Activated T-helper 1 cell treated with anti-CD3 and anti-CD28 coated beads, Interleukin-12 subunit alpha, Interleukin-12 subunit beta, Interleukin-2, Interleukin-4 antibody, amounts not matched to agents 30 ng/mL and 10 ng/mL and 1 ng/mL, durations not matched to agents 14 hours and 24 hours and 36 hours (primary cell): ENCODE measurements at regions of chr2 and their contacts with region 1.

Region 1: GRCh38 chr2:162153608-162154224 is 1.7 kb upstream of the GCG start:
- DNase-seq: peak; percentile 36
- H3K4me3 Mint-ChIP-seq: peak overlapping the region; percentile 28
- H3K27ac Mint-ChIP-seq: no peak overlapping the region
- H3K4me1 Mint-ChIP-seq: peaks cover 7% of the 10 kb centered on the region
- H3K27me3 Mint-ChIP-seq: peaks cover 37% of the 10 kb centered on the region

Region 2: GRCh38 chr2:161586517-161587167 is 567.1 kb before region 1 on chr2:
- intact Hi-C with region 1: loop called (anchors 1 kb)
- DNase-seq: no peak
- H3K4me3 Mint-ChIP-seq: no peak overlapping the region
- H3K27ac Mint-ChIP-seq: no peak overlapping the region
- H3K4me1 Mint-ChIP-seq: peaks cover 4% of the 10 kb centered on the region
- H3K27me3 Mint-ChIP-seq: peaks cover 26% of the 10 kb centered on the region

Region 3: DNA sequence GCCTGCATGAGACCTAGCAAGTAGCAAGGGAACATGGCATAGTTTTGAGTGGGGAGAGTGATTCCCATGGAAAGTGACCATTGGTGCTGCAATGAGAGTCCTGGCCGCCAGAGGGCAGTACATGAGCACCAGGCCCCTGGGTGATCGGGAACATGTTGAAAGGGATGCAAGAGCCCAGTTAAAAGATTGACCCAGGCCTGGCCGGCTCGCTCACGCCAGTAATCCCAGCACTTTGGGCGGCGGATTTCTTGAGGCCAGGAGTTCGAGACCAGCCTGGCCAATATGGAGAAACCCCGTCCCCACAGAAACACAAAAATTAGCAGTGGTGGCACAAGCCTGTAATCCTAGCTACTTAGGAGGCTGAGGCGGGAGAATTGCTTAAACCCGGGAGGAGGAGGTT is 67.3 kb after region 1 on chr2:
- intact Hi-C with region 1: loop called (anchors 2 kb)
- DNase-seq: peak; percentile 24
- H3K4me3 Mint-ChIP-seq: no peak overlapping the region
- H3K27ac Mint-ChIP-seq: no peak overlapping the region
- H3K4me1 Mint-ChIP-seq: no peaks in the 10 kb centered on the region
- H3K27me3 Mint-ChIP-seq: peaks cover 34% of the 10 kb centered on the region